Heart left ventricle (tissue), 16 donors: ENCODE measurements at regions of chr15 and their contacts with region 1.

Region 1: DNA sequence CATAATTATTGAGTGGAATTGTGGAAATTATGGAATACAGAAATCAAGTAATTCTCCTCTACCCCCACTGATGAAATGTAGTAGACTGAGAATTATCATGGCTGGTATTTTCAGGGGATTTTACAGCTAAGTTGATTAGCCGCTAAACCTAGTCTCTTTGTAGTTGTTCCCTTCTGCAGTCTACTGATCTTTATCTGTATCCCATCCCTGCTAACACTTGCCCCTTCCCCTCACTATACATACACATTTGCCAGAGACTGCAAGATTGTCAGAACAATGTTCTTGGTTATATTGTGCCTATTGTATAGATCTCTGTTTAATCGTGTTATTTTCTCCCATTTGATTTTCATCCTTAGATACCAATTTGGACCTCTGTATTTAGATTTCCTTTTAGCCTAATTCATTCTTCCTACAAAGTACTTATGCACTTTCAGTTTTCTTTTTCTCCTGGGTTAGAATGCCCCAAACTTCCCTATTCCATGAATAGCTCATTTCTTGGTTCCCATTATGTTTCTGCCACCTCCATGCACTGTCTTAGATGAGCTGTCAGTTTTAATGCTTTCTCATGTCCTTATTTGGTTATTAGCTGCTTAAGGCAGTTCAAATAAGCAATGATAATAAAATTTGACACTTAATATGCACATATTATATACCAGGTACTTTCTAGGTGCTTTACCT is 86.9 kb downstream of the CDIN1 start:
- DNase-seq: no peak
- ATAC-seq: no peak
- H3K4me3 ChIP-seq: no peak overlapping the region
- H3K27ac ChIP-seq: no peak overlapping the region
- H3K4me1 ChIP-seq: peaks cover 0 to 6% (median 0%) of the 10 kb centered on the region in 12 donors
- H3K27me3 ChIP-seq: no peaks in the 10 kb centered on the region
- CTCF ChIP-seq: no peak
- POLR2A ChIP-seq: no peak

Region 2: DNA sequence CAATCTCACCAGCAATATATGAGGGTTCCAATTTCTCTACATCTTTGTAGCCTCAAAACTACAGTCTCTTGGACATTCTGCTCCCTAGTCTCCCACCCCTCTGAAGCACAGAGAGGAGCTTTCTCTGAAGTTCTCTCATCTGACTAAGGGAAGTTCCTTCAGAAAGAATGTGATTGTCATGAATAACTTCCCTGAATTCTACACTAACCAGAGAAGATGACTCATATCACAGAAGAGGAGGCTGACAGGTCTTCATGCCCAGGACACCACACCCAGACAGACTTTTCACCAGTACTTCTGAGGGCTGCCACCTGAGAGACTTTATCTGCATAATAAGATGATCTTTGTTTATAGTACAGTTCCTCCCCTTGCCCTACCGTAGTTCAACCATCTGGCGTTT is 34.2 kb before region 1 on chr15:
- intact Hi-C with region 1: no loop called
- DNase-seq: no peak
- ATAC-seq: peak in 2 of 4 donors; percentile 12 to 57
- H3K4me3 ChIP-seq: no peak overlapping the region
- H3K27ac ChIP-seq: peak overlapping the region in 1 of 12 donors; percentile 5
- H3K4me1 ChIP-seq: peaks cover 0 to 5% (median 0%) of the 10 kb centered on the region in 12 donors
- H3K27me3 ChIP-seq: no peaks in the 10 kb centered on the region
- CTCF ChIP-seq: no peak
- POLR2A ChIP-seq: no peak

Region 3: DNA sequence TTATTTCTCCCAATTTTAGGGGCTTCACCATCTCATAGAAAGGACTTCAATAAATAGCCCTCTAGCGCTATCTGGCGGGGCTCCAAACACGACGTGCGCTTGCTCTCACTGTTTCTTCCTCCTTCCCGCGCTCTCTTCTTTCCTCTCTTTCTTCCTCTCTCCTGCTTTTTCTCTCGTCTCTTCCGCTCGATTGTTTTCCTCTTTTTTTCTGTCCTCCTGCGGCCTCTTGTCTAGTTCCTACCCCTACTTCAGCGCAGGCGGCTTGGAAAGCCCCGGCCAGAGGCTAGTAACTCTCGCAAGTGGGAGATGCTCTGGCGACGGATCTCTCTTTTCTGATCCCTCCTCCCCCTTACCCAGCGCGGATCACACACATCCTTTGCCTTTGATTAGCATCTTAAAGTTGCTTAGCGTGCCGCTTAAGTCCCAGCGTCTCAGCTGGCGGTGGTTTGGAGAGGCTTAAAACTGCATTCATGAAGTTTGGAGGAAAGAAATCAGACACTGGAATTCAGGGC is 440.2 kb after region 1 on chr15:
- intact Hi-C with region 1: loop called in 1 of 10 experiments (anchors 10 kb)
- DNase-seq: peak in 3 of 5 donors; percentile 39 to 59 (median 45)
- ATAC-seq: no peak
- H3K4me3 ChIP-seq: peak overlapping the region in 9 of 12 donors; percentile 11 to 46 (median 32)
- H3K27ac ChIP-seq: peak overlapping the region in 8 of 12 donors; percentile 2 to 98 (median 30)
- H3K4me1 ChIP-seq: peaks cover 0 to 21% (median 3%) of the 10 kb centered on the region in 12 donors
- H3K27me3 ChIP-seq: peaks cover 0 to 91% (median 17%) of the 10 kb centered on the region in 9 donors
- CTCF ChIP-seq: peak in 5 of 12 donors; percentile 25 to 45 (median 37)
- POLR2A ChIP-seq: no peak